IMR-90 (cell line): ENCODE measurements at regions of chr17 and their contacts with region 1.

Region 1: GRCh38 chr17:21043286-21044232 is 748 bp upstream of the USP22 start:
- DNase-seq: peak; percentile 98
- ATAC-seq: peak; percentile 82
- H3K4me3 ChIP-seq: peak overlapping the region; percentile 56
- H3K27ac ChIP-seq: peak overlapping the region; percentile 93
- H3K4me1 ChIP-seq: peaks cover 9% of the 10 kb centered on the region
- H3K27me3 ChIP-seq: no peaks in the 10 kb centered on the region
- CTCF ChIP-seq: peak; percentile 70
- POLR2A ChIP-seq: no peak
- RAD21 ChIP-seq: peak; percentile 44

Region 2: GRCh38 chr17:20797292-20797691 is 246.3 kb before region 1 on chr17:
- CTCF ChIA-PET with region 1: no interaction called
- POLR2A ChIA-PET with region 1: no interaction called
- dilution Hi-C with region 1: no loop called
- in situ Hi-C with region 1: no loop called
- intact Hi-C with region 1: loop called (anchors 1 kb)
- DNase-seq: no peak
- ATAC-seq: no peak
- H3K4me3 ChIP-seq: no peak overlapping the region
- H3K27ac ChIP-seq: no peak overlapping the region
- H3K4me1 ChIP-seq: no peaks in the 10 kb centered on the region
- H3K27me3 ChIP-seq: no peaks in the 10 kb centered on the region
- CTCF ChIP-seq: no peak
- POLR2A ChIP-seq: no peak
- RAD21 ChIP-seq: no peak

Region 3: GRCh38 chr17:20922128-20922670 is 121.4 kb before region 1 on chr17:
- CTCF ChIA-PET with region 1: no interaction called
- POLR2A ChIA-PET with region 1: no interaction called
- dilution Hi-C with region 1: no loop called
- in situ Hi-C with region 1: no loop called
- intact Hi-C with region 1: loop called (anchors 5 kb)
- DNase-seq: peak; percentile 52
- ATAC-seq: peak; percentile 57
- H3K4me3 ChIP-seq: no peak overlapping the region
- H3K27ac ChIP-seq: peak overlapping the region; percentile 88
- H3K4me1 ChIP-seq: peaks cover 12% of the 10 kb centered on the region
- H3K27me3 ChIP-seq: no peaks in the 10 kb centered on the region
- CTCF ChIP-seq: no peak
- POLR2A ChIP-seq: no peak
- RAD21 ChIP-seq: no peak